B cell (primary cell): ENCODE measurements at regions of chr2 and their contacts with region 1.

Region 1: GRCh38 chr2:191637182-191638078 is 40.5 kb upstream of the NABP1 start:
- DNase-seq: peak; percentile 23
- ATAC-seq: peak; percentile 54
- H3K4me3 ChIP-seq: no peak overlapping the region
- H3K4me3 Mint-ChIP-seq: peak overlapping the region; percentile 54
- H3K27ac ChIP-seq: peak overlapping the region; percentile 24 to 44
- H3K27ac Mint-ChIP-seq: peak overlapping the region; percentile 20
- H3K4me1 ChIP-seq: peaks cover 23 to 25% of the 10 kb centered on the region in 2 donors
- H3K4me1 Mint-ChIP-seq: peaks cover 30% of the 10 kb centered on the region
- H3K27me3 ChIP-seq: no peaks in the 10 kb centered on the region
- H3K27me3 Mint-ChIP-seq: no peaks in the 10 kb centered on the region
- CTCF ChIP-seq: no peak

Region 2: GRCh38 chr2:191601060-191601459 is 36.4 kb before region 1 on chr2:
- CTCF ChIA-PET with region 1: no interaction called
- POLR2A ChIA-PET with region 1: no interaction called
- intact Hi-C with region 1: no loop called
- DNase-seq: no peak
- ATAC-seq: no peak
- H3K4me3 ChIP-seq: no peak overlapping the region
- H3K4me3 Mint-ChIP-seq: no peak overlapping the region
- H3K27ac ChIP-seq: no peak overlapping the region
- H3K27ac Mint-ChIP-seq: no peak overlapping the region
- H3K4me1 ChIP-seq: no peaks in the 10 kb centered on the region
- H3K4me1 Mint-ChIP-seq: no peaks in the 10 kb centered on the region
- H3K27me3 ChIP-seq: no peaks in the 10 kb centered on the region
- H3K27me3 Mint-ChIP-seq: peaks cover 13% of the 10 kb centered on the region
- CTCF ChIP-seq: no peak

Region 3: GRCh38 chr2:191617575-191617974 is 19.9 kb before region 1 on chr2:
- CTCF ChIA-PET with region 1: interaction called, 11 read pairs
- POLR2A ChIA-PET with region 1: interaction called, 8 read pairs
- intact Hi-C with region 1: no loop called
- DNase-seq: peak; percentile 88
- ATAC-seq: peak; percentile 95
- H3K4me3 ChIP-seq: peak overlapping the region in 1 of 5 experiments; percentile 2
- H3K4me3 Mint-ChIP-seq: peak overlapping the region; percentile 62
- H3K27ac ChIP-seq: peak overlapping the region; percentile 77 to 86
- H3K27ac Mint-ChIP-seq: peak overlapping the region; percentile 88
- H3K4me1 ChIP-seq: peaks cover 23 to 29% of the 10 kb centered on the region in 2 donors
- H3K4me1 Mint-ChIP-seq: peaks cover 52% of the 10 kb centered on the region
- H3K27me3 ChIP-seq: no peaks in the 10 kb centered on the region
- H3K27me3 Mint-ChIP-seq: no peaks in the 10 kb centered on the region
- CTCF ChIP-seq: no peak

Region 4: GRCh38 chr2:191650896-191651773 is 13.7 kb after region 1 on chr2:
- CTCF ChIA-PET with region 1: interaction called, 3 read pairs
- POLR2A ChIA-PET with region 1: no interaction called
- intact Hi-C with region 1: loop called (anchors 2 kb)
- DNase-seq: no peak
- ATAC-seq: no peak
- H3K4me3 ChIP-seq: no peak overlapping the region
- H3K4me3 Mint-ChIP-seq: no peak overlapping the region
- H3K27ac ChIP-seq: no peak overlapping the region
- H3K27ac Mint-ChIP-seq: no peak overlapping the region
- H3K4me1 ChIP-seq: no peaks in the 10 kb centered on the region
- H3K4me1 Mint-ChIP-seq: no peaks in the 10 kb centered on the region
- H3K27me3 ChIP-seq: no peaks in the 10 kb centered on the region
- H3K27me3 Mint-ChIP-seq: no peaks in the 10 kb centered on the region
- CTCF ChIP-seq: no peak

Region 5: DNA sequence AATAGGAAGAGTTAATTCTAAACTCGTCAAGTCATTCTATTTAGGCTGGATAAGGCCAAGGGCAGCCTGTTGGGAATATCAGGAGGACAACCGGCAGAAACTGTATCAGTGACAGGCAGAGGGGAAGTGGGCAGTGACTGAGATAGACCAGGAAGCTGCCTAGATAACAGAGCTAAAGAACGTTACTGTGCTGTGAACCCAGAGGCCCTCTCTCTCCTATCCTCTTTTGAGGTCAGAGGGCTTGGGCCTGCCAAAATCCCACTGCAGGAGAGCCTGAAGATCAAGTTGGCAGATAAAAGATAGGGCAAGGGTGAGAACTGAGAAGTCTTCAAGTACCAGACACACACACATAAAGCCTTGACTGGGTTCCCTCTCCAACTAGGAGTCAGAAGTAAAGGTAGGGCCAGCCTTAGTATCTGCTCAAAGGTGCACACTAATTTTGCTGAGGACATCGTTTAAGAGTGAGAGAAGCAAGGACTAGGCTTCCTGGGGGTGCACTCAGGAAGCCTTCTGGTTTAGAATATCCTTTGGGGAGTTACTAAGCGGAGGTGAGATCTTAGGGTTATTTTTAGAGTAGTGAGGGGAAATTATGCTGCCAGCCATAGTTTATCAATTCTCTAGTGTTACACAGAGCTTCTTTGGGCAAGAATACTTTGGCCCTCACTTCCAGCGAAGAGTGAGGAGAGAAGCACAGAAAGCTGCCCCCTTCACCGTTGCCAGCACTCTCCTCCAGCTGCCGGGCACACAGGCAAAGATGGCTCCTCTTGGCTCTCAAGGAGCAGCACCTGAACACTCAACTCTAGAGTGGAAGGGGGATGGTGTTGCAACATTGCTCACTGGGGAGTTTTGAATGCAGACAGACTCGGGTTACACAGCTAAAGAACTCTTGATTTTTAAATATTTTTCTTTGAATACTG is 199.7 kb after region 1 on chr2:
- CTCF ChIA-PET with region 1: no interaction called
- POLR2A ChIA-PET with region 1: no interaction called
- intact Hi-C with region 1: no loop called
- DNase-seq: no peak
- ATAC-seq: no peak
- H3K4me3 ChIP-seq: no peak overlapping the region
- H3K4me3 Mint-ChIP-seq: no peak overlapping the region
- H3K27ac ChIP-seq: no peak overlapping the region
- H3K27ac Mint-ChIP-seq: no peak overlapping the region
- H3K4me1 ChIP-seq: no peaks in the 10 kb centered on the region
- H3K4me1 Mint-ChIP-seq: no peaks in the 10 kb centered on the region
- H3K27me3 ChIP-seq: peaks cover 0 to 5% (median 1%) of the 10 kb centered on the region in 4 experiments
- H3K27me3 Mint-ChIP-seq: peaks cover 5% of the 10 kb centered on the region
- CTCF ChIP-seq: no peak